IMR-90 (cell line): ENCODE measurements at regions of chr12 and their contacts with region 1.

Region 1: GRCh38 chr12:103858953-103859601 is 18.0 kb upstream of the NT5DC3 start:
- DNase-seq: peak; percentile 98
- ATAC-seq: peak; percentile 97
- H3K4me3 ChIP-seq: no peak overlapping the region
- H3K27ac ChIP-seq: peak overlapping the region; percentile 95
- H3K4me1 ChIP-seq: peaks cover 14% of the 10 kb centered on the region
- H3K27me3 ChIP-seq: no peaks in the 10 kb centered on the region
- CTCF ChIP-seq: no peak
- POLR2A ChIP-seq: peak; percentile 64; the same call in 1 of the 2 replicates
- RAD21 ChIP-seq: peak; percentile 18; the same call in 1 of the 2 replicates

Region 2: DNA sequence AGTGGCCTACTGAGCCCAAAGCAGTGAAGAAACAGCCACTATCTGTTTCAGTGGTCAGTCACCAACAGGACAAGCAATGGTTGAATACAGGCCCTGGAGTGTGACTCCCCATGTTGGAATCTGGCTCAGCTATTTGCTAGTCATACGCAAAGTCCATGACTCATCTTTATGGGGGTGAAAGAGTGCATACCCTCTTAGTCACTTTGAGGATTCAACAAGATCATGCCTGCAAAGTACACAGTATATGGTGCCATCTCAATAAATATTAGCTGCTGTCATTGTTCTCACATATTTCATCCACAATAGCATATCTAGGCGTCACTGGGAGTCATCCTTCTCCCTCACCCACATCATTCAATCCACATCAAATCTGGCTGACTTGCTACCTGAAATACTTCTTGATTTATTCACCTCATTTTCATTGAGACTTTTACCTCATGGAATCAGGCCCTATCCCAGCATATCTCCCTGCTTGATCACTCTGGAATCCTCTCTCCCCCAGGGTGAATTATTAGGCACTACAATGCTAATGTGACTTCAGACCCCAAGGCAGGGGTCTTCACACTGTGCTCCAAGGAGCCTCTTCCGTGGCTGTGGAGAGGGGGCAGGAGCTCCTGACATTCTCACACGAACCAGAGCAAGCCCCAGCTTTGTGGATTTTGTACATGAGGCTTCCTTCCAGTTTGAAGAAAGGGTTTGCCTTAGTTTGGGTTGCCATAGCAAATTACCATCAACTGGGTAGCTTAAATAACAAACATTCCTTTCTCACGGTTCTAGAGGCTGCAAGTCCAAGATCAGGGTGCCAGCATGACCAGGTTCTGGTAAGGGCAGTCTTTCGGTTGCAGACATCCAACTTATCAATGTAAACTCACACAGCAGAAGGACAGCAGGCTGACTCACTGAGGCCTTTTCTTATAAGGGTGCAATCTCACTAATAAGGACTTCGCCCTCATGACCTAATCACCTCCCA is 298.2 kb before region 1 on chr12:
- CTCF ChIA-PET with region 1: no interaction called
- POLR2A ChIA-PET with region 1: no interaction called
- dilution Hi-C with region 1: no loop called
- in situ Hi-C with region 1: loop called (anchors 10 kb)
- intact Hi-C with region 1: no loop called
- DNase-seq: peak; percentile 98
- ATAC-seq: peak; percentile 98
- H3K4me3 ChIP-seq: no peak overlapping the region
- H3K27ac ChIP-seq: no peak overlapping the region
- H3K4me1 ChIP-seq: peaks cover 4% of the 10 kb centered on the region
- H3K27me3 ChIP-seq: peaks cover 5% of the 10 kb centered on the region
- CTCF ChIP-seq: no peak
- POLR2A ChIP-seq: no peak
- RAD21 ChIP-seq: no peak

Region 3: DNA sequence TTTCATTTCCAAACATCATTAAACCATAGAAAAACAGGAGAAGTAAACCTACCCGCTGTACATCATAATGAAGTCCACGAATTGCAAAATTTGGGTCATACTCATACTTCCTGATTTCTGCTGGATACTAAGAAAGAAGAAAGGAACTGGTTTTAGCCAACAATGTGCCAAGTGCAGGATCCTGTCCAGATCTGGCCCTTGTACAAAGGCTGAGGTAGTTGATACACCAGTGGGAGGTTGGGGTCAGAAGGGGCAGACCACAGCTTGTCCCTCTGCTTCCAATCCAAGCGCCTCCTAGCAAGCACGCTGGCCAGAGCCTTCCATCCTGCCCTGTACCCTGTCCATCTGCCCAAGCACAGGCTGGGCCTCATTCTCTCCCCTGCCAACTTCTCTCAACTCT is 52.3 kb before region 1 on chr12:
- CTCF ChIA-PET with region 1: no interaction called
- POLR2A ChIA-PET with region 1: no interaction called
- dilution Hi-C with region 1: no loop called
- in situ Hi-C with region 1: no loop called
- intact Hi-C with region 1: loop called (anchors 2 kb)
- DNase-seq: no peak
- ATAC-seq: no peak
- H3K4me3 ChIP-seq: no peak overlapping the region
- H3K27ac ChIP-seq: 0 out of 2 replicates have a peak overlapping the region, but pooled peaks have one; percentile 14
- H3K4me1 ChIP-seq: peaks cover 20% of the 10 kb centered on the region
- H3K27me3 ChIP-seq: no peaks in the 10 kb centered on the region
- CTCF ChIP-seq: no peak
- POLR2A ChIP-seq: no peak
- RAD21 ChIP-seq: no peak

Region 4: GRCh38 chr12:103821773-103822172 is 37.3 kb before region 1 on chr12:
- CTCF ChIA-PET with region 1: no interaction called
- POLR2A ChIA-PET with region 1: no interaction called
- dilution Hi-C with region 1: no loop called
- in situ Hi-C with region 1: no loop called
- intact Hi-C with region 1: no loop called
- DNase-seq: peak; percentile 71
- ATAC-seq: peak; percentile 67
- H3K4me3 ChIP-seq: no peak overlapping the region
- H3K27ac ChIP-seq: no peak overlapping the region
- H3K4me1 ChIP-seq: peaks cover 21% of the 10 kb centered on the region
- H3K27me3 ChIP-seq: no peaks in the 10 kb centered on the region
- CTCF ChIP-seq: no peak
- POLR2A ChIP-seq: no peak
- RAD21 ChIP-seq: no peak

Region 5: GRCh38 chr12:103936679-103937078 is 77.6 kb after region 1 on chr12:
- CTCF ChIA-PET with region 1: no interaction called
- POLR2A ChIA-PET with region 1: interaction called, 11 read pairs
- dilution Hi-C with region 1: no loop called
- in situ Hi-C with region 1: no loop called
- intact Hi-C with region 1: no loop called
- DNase-seq: no peak
- ATAC-seq: no peak
- H3K4me3 ChIP-seq: no peak overlapping the region
- H3K27ac ChIP-seq: no peak overlapping the region
- H3K4me1 ChIP-seq: peaks cover 2% of the 10 kb centered on the region; the same call in 1 of the 2 replicates
- H3K27me3 ChIP-seq: no peaks in the 10 kb centered on the region
- CTCF ChIP-seq: no peak
- POLR2A ChIP-seq: no peak
- RAD21 ChIP-seq: no peak

Region 6: GRCh38 chr12:104272938-104273337 is 413.9 kb after region 1 on chr12:
- CTCF ChIA-PET with region 1: no interaction called
- POLR2A ChIA-PET with region 1: no interaction called
- dilution Hi-C with region 1: no loop called
- in situ Hi-C with region 1: no loop called
- intact Hi-C with region 1: no loop called
- DNase-seq: no peak
- ATAC-seq: no peak
- H3K4me3 ChIP-seq: no peak overlapping the region
- H3K27ac ChIP-seq: no peak overlapping the region
- H3K4me1 ChIP-seq: peaks cover 2% of the 10 kb centered on the region
- H3K27me3 ChIP-seq: no peaks in the 10 kb centered on the region
- CTCF ChIP-seq: no peak
- POLR2A ChIP-seq: no peak
- RAD21 ChIP-seq: no peak